Psoas muscle (tissue), 8 donors: ENCODE measurements at regions of chr1 and their contacts with region 1.

Region 1: DNA sequence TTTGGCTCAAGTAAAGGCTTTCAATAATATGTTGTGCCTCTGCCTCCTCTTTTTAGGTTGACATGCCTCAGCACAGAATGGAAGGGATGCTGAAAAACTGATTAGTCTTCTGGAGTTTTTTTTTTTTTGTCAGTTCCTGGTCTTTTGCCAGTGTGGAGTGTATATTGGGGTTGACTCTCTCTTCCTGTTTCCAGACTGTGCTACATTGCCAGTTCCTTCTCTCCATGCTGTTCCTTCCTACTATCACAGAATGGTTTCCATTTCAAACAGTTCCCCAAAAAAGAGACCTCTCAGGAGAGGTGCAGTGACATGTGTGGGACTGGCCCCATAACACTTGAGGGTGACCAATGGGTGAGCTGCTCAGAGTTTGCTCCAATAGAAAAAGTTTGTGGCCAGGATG is 101.7 kb upstream of the ETV3 start:
- DNase-seq: no peak
- ATAC-seq: no peak
- H3K4me3 ChIP-seq: no peak overlapping the region
- H3K27ac ChIP-seq: no peak overlapping the region
- H3K4me1 ChIP-seq: no peaks in the 10 kb centered on the region
- H3K27me3 ChIP-seq: peaks cover 0 to 8% (median 0%) of the 10 kb centered on the region in 3 donors
- CTCF ChIP-seq: no peak

Region 2: DNA sequence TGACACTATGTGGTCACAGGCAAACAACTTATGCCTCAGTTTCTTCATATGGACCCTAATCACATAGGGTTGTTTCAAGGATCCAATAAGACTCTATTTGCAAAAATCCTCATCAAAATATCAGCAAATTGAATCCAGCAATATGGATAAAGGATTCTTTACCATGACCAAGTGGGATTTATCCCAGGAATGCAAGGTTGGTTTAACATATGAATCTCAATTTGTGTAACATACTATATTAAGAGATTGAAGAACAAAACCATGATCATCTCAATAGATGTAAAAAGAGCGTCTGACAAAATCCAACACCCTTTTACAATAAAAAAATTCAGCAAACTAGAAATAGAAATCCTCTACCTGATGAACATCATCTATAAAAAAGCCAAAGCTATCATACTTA is 218.2 kb before region 1 on chr1:
- intact Hi-C with region 1: loop called in 1 of 2 experiments (anchors 5 kb)
- DNase-seq: no peak
- ATAC-seq: no peak
- H3K4me3 ChIP-seq: no peak overlapping the region
- H3K27ac ChIP-seq: no peak overlapping the region
- H3K4me1 ChIP-seq: no peaks in the 10 kb centered on the region
- H3K27me3 ChIP-seq: no peaks in the 10 kb centered on the region
- CTCF ChIP-seq: no peak

Region 3: DNA sequence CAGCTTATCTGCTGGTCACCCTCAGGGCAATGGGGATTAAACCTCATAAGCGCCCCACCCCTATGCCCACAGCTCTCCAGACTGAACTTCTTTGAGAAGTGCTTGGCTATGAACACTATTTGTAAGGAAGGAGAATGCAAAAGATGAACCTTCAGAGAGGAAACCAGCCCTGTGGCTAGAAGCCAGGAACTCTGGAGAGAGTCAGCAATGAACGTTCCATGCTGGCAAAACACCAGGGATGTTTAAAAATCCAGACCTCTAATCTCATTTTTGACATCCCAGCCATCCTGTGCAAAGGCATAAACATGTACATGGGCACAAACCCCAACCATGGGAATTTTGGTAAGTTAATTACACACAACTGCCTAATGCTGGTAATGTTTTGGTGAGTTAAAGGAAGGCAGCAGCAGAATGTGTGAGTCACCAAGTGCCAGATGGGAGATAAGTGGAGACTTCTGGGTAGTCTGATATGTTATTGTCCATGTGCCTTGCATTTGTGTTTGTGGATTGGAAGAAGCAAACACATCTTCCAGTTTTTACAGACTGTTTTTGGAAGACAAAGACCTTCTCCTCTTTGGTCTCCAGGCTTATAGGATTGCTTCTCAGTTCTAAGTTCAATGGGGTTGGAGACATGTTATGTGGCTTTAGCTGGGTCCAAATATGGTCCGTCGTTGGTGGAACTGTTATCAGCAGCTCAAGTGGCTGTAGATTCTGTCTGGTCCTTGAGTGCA is 72.3 kb after region 1 on chr1:
- intact Hi-C with region 1: no loop called
- DNase-seq: no peak
- ATAC-seq: no peak
- H3K4me3 ChIP-seq: no peak overlapping the region
- H3K27ac ChIP-seq: no peak overlapping the region
- H3K4me1 ChIP-seq: no peaks in the 10 kb centered on the region
- H3K27me3 ChIP-seq: peaks cover 0 to 5% (median 2%) of the 10 kb centered on the region in 3 donors
- CTCF ChIP-seq: no peak

Region 4: GRCh38 chr1:157472056-157472698 is 232.2 kb after region 1 on chr1:
- intact Hi-C with region 1: no loop called
- DNase-seq: no peak
- ATAC-seq: no peak
- H3K4me3 ChIP-seq: no peak overlapping the region
- H3K27ac ChIP-seq: no peak overlapping the region
- H3K4me1 ChIP-seq: no peaks in the 10 kb centered on the region
- H3K27me3 ChIP-seq: peaks cover 0 to 5% (median 0%) of the 10 kb centered on the region in 3 donors
- CTCF ChIP-seq: no peak